AG04449 (cell line): ENCODE measurements at regions of chr4 and their contacts with region 1.

Region 1: GRCh38 chr4:110631584-110632505 is 9.0 kb upstream of the PITX2 start:
- DNase-seq: peak; percentile 46
- H3K4me3 ChIP-seq: peak overlapping the region; percentile 42
- CTCF ChIP-seq: peak; percentile 87

Region 2: DNA sequence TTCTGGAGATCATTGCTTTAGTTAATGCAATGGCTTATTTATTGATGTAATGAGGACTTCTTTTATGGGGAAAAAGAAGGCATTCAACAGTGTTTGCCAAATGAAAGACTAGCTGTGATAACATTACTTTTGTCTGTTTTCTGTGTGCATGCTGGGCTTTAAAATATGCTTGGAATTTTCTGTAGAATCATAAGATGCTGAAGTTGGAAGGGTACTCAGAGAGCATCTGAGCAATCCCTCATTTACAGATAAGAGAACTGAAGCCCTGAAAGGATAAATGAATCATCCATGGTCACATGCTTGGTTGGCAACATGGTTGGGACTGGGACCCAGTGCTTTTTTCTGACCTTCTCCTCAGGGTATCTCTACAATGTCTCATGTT is 22.4 kb after region 1 on chr4:
- CTCF ChIA-PET with region 1: no interaction called
- POLR2A ChIA-PET with region 1: no interaction called
- DNase-seq: peak; percentile 31
- H3K4me3 ChIP-seq: no peak overlapping the region
- CTCF ChIP-seq: no peak

Region 3: GRCh38 chr4:110808351-110808878 is 176.6 kb after region 1 on chr4:
- CTCF ChIA-PET with region 1: no interaction called
- POLR2A ChIA-PET with region 1: no interaction called
- DNase-seq: no peak
- H3K4me3 ChIP-seq: no peak overlapping the region
- CTCF ChIP-seq: no peak

Region 4: GRCh38 chr4:110959041-110959643 is 327.3 kb after region 1 on chr4:
- CTCF ChIA-PET with region 1: interaction called, 26 read pairs
- POLR2A ChIA-PET with region 1: no interaction called
- DNase-seq: no peak
- H3K4me3 ChIP-seq: no peak overlapping the region
- CTCF ChIP-seq: peak; percentile 14

Region 5: DNA sequence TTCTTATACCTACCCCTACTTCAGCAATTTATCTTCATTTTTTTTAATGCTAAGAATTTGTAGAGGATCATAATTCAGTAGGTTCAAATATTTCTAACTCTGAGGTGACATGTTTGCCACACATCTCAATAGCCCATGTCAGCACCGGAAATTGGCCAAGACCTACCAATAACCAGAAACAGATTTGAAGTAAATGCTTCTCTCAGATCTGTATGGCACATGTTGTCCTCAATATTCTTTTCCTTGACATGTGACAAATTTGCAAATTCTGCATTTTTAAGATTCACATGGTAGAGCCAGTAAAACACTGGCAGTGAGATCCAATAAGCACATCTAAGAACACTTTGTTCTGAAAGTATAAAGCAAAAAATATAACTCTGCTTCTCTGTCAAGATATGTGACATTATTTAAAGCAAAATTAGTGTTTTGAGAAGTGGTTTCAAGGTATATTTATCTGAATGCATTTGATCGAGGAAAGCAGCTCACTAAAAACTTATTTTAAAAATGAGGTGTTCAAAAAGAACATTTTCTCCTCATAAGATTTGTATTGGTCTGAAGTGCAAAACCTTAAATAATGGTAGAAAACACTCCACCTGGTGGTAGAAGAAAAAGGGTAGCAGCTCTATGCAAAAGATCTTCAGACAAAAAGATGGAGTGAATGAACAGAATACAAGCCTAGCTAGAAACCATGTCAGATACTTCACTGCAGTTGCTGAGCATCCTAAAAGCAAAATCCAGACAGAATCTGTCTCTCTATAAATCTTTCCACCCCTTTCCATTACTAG is 999.6 kb after region 1 on chr4:
- CTCF ChIA-PET with region 1: interaction called, 26 read pairs
- POLR2A ChIA-PET with region 1: no interaction called
- DNase-seq: no peak
- H3K4me3 ChIP-seq: no peak overlapping the region
- CTCF ChIP-seq: peak; percentile 33